GM13976 (cell line): ENCODE measurements at regions of chr2 and their contacts with region 1.

Region 1: GRCh38 chr2:172931918-172932520 is 143.6 kb upstream of the MAP3K20 start:
- DNase-seq: peak; percentile 56
- CTCF ChIP-seq: peak; percentile 39

Region 2: DNA sequence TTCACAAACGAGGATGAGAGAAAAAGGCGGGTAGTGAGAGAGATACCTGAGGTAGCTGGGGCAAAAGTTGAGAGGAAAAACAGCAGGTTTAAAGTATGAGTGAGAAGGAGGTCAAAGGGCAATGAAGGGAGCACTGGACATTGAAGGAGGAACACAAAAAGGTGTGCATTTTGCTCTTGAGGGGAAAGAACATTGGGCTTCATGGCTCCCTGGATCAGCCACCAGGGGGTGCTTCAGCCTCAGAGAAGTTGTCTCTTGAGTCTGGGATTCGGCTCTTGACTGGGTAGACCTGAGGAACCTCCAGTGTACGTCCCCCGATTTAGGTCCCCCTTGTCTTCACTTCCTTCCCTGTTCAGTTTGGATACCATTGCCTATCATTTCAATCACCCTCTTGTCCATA is 67.8 kb before region 1 on chr2:
- in situ Hi-C with region 1: loop called (anchors 5 kb)
- DNase-seq: peak; percentile 42
- CTCF ChIP-seq: peak; percentile 66